Activated CD8-positive, alpha-beta T cell treated with anti-CD3 and anti-CD28 coated beads, Interleukin-2, amount 10 ng/mL, durations not matched to agents 7 days and 5 days (primary cell): ENCODE measurements at regions of chr3 and their contacts with region 1.

Region 1: DNA sequence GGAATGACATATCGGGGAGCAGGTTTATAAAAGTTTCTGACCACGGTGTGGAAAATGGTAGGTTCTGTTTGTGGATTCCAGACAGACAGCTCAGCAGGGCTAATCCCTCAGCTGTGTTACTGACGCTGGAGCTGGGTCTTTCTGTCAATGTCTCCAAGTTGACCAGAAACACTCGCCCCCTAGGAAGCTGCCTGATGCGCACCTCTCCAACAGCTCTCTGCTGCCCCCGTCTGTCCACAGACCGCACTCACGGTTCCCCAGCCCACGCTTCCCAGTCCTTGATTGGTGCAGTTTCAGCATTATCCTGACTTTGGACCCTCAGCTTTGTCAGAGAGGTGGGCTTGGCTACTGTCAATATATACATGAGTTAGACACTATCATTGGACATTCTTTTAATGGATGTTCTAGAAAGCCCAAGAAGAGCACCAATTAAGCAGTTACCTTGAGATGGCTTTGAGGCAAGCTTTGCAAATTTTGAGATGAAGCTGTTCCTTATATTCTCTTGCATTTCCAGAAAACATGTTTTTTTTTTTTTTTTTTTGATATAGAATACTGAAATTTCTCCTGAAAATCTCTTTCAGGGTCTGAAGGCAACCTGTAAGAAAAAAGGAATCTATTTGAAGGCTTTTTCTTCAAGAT is 98.9 kb upstream of the TBC1D5 start:
- DNase-seq: peak; percentile 79
- ATAC-seq: peak; percentile 89
- H3K4me3 Mint-ChIP-seq: no peak overlapping the region
- H3K27ac Mint-ChIP-seq: no peak overlapping the region
- H3K4me1 Mint-ChIP-seq: no peaks in the 10 kb centered on the region
- H3K27me3 Mint-ChIP-seq: peaks cover 6% of the 10 kb centered on the region

Region 2: DNA sequence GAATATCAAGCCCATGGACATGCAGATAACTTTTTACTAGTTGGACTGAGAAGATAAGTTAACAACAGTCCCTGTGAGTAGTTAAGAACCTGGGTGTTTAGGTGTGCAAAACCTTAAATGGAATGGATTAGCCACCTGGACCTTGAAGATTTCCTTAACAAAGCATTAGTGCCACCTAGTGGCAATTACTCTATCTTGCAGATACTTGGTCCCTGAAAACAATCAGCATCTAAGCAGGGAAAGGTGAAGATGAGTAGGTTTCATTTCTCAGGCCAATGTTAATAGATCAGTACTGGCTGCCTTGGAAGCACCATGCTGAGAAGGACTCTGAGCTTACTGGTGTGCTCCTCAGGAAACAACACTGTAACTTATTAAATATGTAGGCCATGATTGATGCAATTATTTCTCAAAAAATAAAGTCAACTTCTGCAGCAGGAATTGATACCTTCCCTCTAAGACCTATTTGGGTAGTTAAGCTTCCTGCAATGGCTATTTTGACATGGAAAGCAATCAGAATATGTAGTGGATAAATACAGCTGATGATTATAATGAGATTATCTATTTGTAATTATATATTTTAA is 428.3 kb before region 1 on chr3:
- CTCF ChIA-PET with region 1: interaction called, 17 read pairs
- POLR2A ChIA-PET with region 1: no interaction called
- DNase-seq: peak; percentile 48
- ATAC-seq: peak; percentile 76
- H3K4me3 Mint-ChIP-seq: no peak overlapping the region
- H3K27ac Mint-ChIP-seq: no peak overlapping the region
- H3K4me1 Mint-ChIP-seq: no peaks in the 10 kb centered on the region
- H3K27me3 Mint-ChIP-seq: no peaks in the 10 kb centered on the region

Region 3: DNA sequence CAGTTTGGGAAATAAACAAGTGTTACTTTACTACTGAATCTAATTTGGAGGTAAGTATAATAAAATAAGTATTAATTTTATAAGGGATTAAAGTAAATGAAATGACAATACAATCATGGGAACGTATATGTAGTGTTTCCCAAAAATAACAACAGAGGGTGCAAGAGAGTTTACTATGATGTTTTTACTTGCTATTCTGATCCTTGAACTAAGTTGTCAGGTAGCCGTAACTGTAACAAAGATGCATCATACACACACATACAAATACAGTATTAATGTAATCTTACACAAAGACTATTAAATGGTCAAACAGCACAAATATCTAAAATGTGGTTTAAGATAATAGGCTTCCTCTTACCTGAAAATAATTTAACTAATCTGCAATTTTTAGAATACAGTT is 410.3 kb before region 1 on chr3:
- CTCF ChIA-PET with region 1: interaction called, 38 read pairs
- POLR2A ChIA-PET with region 1: no interaction called
- DNase-seq: no peak
- ATAC-seq: no peak
- H3K4me3 Mint-ChIP-seq: no peak overlapping the region
- H3K27ac Mint-ChIP-seq: no peak overlapping the region
- H3K4me1 Mint-ChIP-seq: no peaks in the 10 kb centered on the region
- H3K27me3 Mint-ChIP-seq: no peaks in the 10 kb centered on the region

Region 4: DNA sequence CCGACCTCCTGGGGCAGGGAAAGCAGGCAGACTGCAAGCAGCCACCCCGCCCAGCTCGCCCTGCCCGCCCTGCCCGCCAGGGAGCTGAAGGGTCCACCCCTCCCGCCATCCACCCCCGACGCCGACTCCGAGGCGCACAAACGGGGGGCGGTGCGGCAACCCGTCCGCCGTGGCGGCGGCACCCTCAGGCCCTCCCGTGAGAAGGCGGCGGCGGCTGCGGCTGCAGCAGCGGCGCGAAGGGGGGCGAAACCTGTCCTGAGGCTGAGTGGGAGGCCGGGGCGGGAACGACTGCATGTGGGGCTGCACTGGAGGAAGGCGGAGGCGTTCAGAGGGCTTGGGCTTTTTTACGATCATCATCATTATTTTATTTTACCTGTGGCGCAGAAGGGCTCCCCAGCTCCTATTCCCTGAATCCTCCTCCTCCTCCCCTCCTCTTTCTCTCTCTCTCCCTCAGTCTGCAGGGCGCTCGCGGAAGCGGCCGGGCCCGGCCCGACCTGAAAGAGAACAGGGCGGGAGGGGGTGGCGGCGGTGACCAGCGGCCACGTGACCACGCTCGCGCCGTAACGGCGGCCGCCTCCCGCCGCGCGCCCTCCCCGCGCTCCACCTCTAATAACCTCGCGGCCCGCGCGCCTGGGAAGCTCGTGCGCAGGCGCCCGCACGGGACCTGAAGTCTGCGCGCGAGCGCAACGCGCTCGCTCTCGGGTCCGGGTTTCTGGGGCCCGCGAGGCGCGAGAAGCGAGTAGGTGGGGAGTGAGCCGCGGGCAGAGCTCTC is 99.0 kb before region 1 on chr3 and contains the start of gene TBC1D5:
- CTCF ChIA-PET with region 1: interaction called, 10 read pairs
- POLR2A ChIA-PET with region 1: no interaction called
- DNase-seq: peak; percentile 96
- ATAC-seq: peak; percentile 97
- H3K4me3 Mint-ChIP-seq: peak within 1 kb of the TSS; percentile 93
- H3K27ac Mint-ChIP-seq: peak within 1 kb of the TSS; percentile 96
- H3K4me1 Mint-ChIP-seq: peaks cover 54% of the 10 kb centered on the region
- H3K27me3 Mint-ChIP-seq: no peaks in the 10 kb centered on the region
- total RNA-seq, gene TBC1D5: 51.2 to 52.8 TPM

Region 5: DNA sequence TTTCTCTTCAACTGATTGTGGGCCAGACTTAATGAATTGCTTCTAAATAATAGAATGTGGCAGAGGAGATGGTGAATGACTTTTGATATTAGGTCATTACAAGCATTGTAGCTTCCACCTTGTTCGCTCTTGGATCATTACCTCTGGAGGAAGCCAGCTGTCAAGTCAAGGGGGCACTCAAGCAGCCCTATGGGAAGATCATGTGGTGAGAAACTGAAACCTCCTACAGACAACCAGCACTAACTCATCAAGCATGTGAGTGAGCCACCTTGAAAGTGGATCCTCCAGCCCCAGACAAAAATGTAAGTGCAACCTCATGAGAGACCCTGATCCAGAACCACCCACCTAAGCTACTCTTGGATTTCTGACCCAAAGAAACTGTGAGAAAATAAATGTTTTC is 10.9 kb after region 1 on chr3:
- CTCF ChIA-PET with region 1: interaction called, 16 read pairs
- POLR2A ChIA-PET with region 1: no interaction called
- DNase-seq: no peak
- ATAC-seq: no peak
- H3K4me3 Mint-ChIP-seq: no peak overlapping the region
- H3K27ac Mint-ChIP-seq: no peak overlapping the region
- H3K4me1 Mint-ChIP-seq: no peaks in the 10 kb centered on the region
- H3K27me3 Mint-ChIP-seq: peaks cover 27% of the 10 kb centered on the region